Mammary epithelial cell (primary cell): ENCODE measurements at regions of chr7 and their contacts with region 1.

Region 1: DNA sequence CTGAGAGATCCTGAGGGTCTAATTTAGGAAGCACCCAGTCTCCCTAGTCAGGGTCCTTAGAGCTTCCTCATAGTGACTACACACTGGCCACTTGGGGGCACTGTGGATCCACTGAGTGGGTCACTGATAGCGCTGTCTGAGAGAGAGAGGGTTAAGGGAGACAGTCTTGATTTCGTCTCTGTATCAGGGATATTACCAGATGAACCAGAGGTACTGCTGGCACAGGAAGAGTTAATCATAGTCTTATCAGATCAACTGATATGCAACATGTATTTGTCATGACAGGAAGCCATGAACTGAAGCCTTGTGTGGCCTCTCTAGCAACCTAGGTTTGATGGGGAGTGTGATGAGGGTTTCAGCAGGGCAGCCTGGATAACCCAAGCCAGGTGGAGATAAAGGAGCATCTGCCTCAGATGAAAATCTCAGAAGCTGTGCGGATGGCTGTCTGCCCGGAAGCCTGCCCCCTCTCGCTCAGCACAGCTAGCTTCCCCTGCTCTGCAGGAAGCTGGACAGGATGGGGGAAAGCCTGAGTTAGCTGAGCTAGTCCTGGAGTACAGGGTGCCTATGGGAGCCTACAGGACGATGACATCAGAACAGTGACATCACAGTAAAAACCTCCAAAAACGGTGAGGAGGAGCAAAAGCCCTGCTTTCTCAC is 214.0 kb upstream of the PRSS1 start:
- DNase-seq: peak; percentile 70
- H3K4me3 ChIP-seq: no peak overlapping the region
- H3K27ac ChIP-seq: no peak overlapping the region
- H3K4me1 ChIP-seq: peaks cover 24% of the 10 kb centered on the region
- H3K27me3 ChIP-seq: no peaks in the 10 kb centered on the region
- CTCF ChIP-seq: peak; percentile 94 to 98

Region 2: DNA sequence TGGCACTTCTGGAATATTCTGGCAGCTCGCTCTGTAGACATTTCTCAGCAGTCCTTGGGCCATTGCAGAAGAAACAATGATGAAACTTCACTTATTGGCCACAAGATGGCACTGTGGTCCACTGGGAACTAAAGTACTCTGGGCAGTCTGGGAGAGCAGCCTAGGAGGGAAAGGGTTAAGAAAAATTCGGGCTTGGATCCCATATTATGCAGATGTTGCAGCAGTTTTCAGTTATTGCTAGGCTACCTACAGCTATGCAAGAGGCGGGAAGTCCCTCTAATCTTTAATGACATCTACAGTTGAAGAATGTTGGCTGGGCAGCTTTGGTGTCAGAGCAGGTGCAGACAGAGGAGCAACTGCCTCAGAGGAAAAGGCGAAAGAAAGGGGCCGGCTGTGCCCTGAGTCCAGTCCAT is 75.7 kb before region 1 on chr7:
- CTCF ChIA-PET with region 1: no interaction called
- dilution Hi-C with region 1: no loop called
- in situ Hi-C with region 1: no loop called
- intact Hi-C with region 1: no loop called
- DNase-seq: peak; percentile 67
- H3K4me3 ChIP-seq: no peak overlapping the region
- H3K27ac ChIP-seq: no peak overlapping the region
- H3K4me1 ChIP-seq: peaks cover 19% of the 10 kb centered on the region
- H3K27me3 ChIP-seq: no peaks in the 10 kb centered on the region
- CTCF ChIP-seq: peak; percentile 70 to 77

Region 3: GRCh38 chr7:142516038-142516501 is 19.2 kb before region 1 on chr7:
- CTCF ChIA-PET with region 1: no interaction called
- dilution Hi-C with region 1: no loop called
- in situ Hi-C with region 1: no loop called
- intact Hi-C with region 1: no loop called
- DNase-seq: peak; percentile 61
- H3K4me3 ChIP-seq: no peak overlapping the region
- H3K27ac ChIP-seq: no peak overlapping the region
- H3K4me1 ChIP-seq: peaks cover 5% of the 10 kb centered on the region
- H3K27me3 ChIP-seq: no peaks in the 10 kb centered on the region
- CTCF ChIP-seq: peak; percentile 82 to 84

Region 4: GRCh38 chr7:142557971-142558582 is 22.8 kb after region 1 on chr7:
- CTCF ChIA-PET with region 1: interaction called, 3 read pairs
- dilution Hi-C with region 1: no loop called
- in situ Hi-C with region 1: no loop called
- intact Hi-C with region 1: loop called (anchors 1 kb)
- DNase-seq: peak; percentile 28
- H3K4me3 ChIP-seq: no peak overlapping the region
- H3K27ac ChIP-seq: peak overlapping the region; percentile 88
- H3K4me1 ChIP-seq: peaks cover 42% of the 10 kb centered on the region
- H3K27me3 ChIP-seq: no peaks in the 10 kb centered on the region
- CTCF ChIP-seq: peak; percentile 70 to 93

Region 5: DNA sequence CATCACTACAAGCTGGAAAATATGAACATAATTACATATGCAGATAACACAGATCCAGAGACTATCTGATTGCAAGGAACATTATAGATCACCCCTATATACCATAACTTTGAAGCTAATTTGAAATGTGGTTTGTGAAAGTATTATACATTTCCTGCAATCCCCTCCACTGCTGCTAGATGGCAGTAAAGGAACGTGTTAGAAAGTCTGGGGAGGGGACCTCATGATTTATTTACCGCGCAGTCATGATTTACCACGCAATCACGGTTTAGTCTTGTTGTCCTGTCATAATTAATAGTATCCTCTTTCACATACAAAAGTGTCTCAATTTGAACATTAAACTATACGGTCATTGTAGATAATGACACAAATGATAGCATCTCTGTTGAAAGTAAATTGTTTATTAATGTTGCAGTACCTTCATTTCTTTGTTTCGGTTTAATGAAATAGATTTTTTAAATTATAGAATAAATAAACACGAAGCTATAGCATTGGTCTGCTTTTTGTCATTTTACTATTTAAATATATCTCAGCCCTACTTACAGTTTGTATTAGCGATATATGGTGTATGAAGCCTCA is 68.7 kb after region 1 on chr7:
- CTCF ChIA-PET with region 1: no interaction called
- dilution Hi-C with region 1: no loop called
- in situ Hi-C with region 1: no loop called
- intact Hi-C with region 1: loop called (anchors 1 kb)
- DNase-seq: peak; percentile 32
- H3K4me3 ChIP-seq: no peak overlapping the region
- H3K27ac ChIP-seq: no peak overlapping the region
- H3K4me1 ChIP-seq: no peaks in the 10 kb centered on the region
- H3K27me3 ChIP-seq: no peaks in the 10 kb centered on the region
- CTCF ChIP-seq: peak; percentile 88 to 89

Region 6: DNA sequence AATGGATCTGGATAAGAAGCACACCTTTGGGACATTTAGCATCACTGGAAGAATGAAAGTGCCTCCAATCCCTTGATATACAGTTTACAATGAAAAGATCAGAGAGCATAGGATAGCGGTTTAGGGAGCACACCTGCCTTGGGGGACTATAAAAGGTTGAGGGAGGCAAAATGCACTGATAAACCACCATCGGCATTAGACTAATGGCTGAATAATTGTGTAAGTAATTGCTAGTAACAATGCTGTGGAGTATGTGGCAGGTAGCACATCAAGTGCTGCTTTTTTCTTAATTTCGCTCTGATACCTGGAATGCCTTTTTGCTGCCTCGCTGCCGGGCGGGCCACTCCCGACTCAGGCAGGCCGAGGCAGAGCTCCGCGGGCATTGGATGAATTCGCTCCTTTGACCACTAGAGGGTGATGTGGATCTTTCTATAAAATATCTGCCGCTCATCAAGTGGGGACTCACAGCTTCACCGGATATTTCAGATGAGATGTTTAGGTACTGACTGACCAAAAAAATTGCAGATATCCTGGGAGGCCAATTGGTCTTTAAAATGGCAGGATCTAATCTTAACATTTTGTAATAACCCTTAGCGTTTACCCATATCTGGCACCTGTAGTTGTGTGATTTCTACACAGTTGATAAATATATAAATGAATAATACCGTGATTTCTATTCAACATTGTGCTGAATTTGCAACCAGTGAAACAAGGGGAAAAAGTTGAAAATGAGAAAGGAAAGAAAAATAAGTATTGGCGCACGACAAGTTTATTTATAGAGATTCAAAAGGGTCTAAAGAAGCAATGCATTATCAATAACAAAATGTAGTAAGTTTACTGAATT is 97.3 kb after region 1 on chr7:
- CTCF ChIA-PET with region 1: no interaction called
- dilution Hi-C with region 1: no loop called
- in situ Hi-C with region 1: no loop called
- intact Hi-C with region 1: loop called (anchors 1 kb)
- DNase-seq: peak; percentile 55
- H3K4me3 ChIP-seq: no peak overlapping the region
- H3K27ac ChIP-seq: no peak overlapping the region
- H3K4me1 ChIP-seq: no peaks in the 10 kb centered on the region
- H3K27me3 ChIP-seq: no peaks in the 10 kb centered on the region
- CTCF ChIP-seq: peak; percentile 72 to 74

Region 7: GRCh38 chr7:142711746-142712619 is 176.7 kb after region 1 on chr7:
- CTCF ChIA-PET with region 1: no interaction called
- dilution Hi-C with region 1: no loop called
- in situ Hi-C with region 1: no loop called
- intact Hi-C with region 1: loop called (anchors 1 kb)
- DNase-seq: peak; percentile 8
- H3K4me3 ChIP-seq: no peak overlapping the region
- H3K27ac ChIP-seq: no peak overlapping the region
- H3K4me1 ChIP-seq: no peaks in the 10 kb centered on the region
- H3K27me3 ChIP-seq: peaks cover 4% of the 10 kb centered on the region
- CTCF ChIP-seq: peak; percentile 65 to 71